Activated CD4-positive, alpha-beta T cell treated with anti-CD3 and anti-CD28 coated beads, Interleukin-2, amount 10 ng/mL, durations not matched to agents 24 days and 14 days (primary cell): ENCODE measurements at regions of chr6 and their contacts with region 1.

Region 1: GRCh38 chr6:35583893-35584688 is 71.4 kb upstream of the TULP1 start:
- DNase-seq: peak; percentile 91
- H3K4me3 Mint-ChIP-seq: no peak overlapping the region
- H3K27ac Mint-ChIP-seq: no peak overlapping the region
- H3K4me1 Mint-ChIP-seq: peaks cover 32% of the 10 kb centered on the region
- H3K27me3 Mint-ChIP-seq: no peaks in the 10 kb centered on the region

Region 2: DNA sequence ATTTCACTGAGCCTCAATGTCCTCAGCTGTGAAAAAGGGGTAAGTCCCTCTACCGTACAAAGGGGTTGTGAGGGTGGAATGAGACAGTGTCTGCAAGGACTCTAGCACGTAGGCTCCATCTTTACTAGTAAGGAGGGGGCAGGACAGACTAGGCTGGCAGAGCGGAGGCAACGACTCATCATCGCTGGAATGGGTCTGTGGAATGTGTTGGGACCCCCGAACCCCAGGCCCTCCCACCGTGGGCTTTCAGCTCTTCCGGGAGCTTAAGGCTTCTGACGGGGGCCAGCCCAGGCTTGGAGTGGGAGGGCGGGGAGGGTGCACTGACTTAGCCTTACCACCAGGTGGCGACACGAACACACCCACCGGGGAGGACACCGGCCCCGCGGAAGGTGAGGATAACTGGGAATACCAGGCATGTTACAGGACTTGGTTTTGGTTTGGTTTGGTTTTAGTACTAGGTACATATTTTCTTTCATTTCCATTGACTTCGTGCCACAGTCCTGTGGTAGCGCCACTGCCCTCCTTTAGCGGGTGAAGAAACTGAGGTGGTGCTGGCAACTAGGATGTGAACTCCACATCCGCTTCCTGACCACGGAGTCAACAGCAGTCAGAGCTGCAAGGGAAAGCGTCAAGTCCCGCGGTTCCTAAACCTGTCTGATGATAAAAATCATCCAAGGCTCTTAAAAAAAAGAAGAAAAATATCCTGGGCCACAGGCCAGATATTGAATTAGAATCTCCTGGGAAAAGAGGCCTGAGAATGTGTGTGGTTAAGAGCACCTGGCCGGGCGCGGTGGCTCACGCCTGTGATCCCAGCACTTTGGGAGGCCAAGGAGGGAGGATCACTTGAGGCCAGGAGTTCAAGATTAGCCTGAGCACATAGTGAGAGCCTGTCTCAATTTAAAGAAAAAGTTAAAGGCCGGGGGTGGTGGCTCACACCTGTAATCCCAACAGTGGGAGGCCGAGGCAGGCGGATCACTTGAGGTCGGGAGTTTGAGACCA is 61.1 kb before region 1 on chr6:
- intact Hi-C with region 1: loop called (anchors 5 kb)
- DNase-seq: peak; percentile 89
- H3K4me3 Mint-ChIP-seq: peak overlapping the region; percentile 73
- H3K27ac Mint-ChIP-seq: peak overlapping the region; percentile 64
- H3K4me1 Mint-ChIP-seq: peaks cover 16% of the 10 kb centered on the region
- H3K27me3 Mint-ChIP-seq: peaks cover 5% of the 10 kb centered on the region

Region 3: DNA sequence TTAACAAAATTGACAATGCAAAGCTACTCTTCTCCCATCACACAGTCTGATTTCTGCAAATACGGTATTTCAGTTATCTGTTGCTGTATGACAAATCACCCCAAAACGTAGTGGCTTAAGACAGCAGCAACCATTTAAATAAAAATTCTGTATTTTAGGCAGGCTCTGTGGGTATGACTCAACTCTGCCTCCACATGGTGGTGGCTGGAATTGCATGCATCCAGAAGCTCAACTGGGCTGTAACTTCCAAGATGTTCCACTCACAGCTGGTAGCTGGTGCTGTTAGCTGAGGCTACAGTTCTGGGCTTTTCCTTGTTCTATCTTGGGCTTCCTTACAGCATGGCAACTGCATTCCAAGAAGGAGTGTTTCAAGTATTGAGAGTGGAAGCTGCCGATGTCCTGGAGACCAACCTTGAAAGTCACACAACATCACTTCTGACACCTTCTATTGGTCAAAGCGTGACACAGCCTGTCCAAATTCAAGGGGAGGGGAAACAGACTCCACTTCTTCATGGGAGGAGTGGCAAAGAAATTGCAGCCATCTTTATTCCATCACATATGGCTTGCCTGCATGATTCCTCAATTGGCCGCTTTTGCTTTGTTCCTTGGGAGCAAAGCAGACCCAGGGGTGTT is 31.7 kb before region 1 on chr6:
- intact Hi-C with region 1: no loop called
- DNase-seq: peak; percentile 88
- H3K4me3 Mint-ChIP-seq: no peak overlapping the region
- H3K27ac Mint-ChIP-seq: no peak overlapping the region
- H3K4me1 Mint-ChIP-seq: no peaks in the 10 kb centered on the region
- H3K27me3 Mint-ChIP-seq: peaks cover 12% of the 10 kb centered on the region

Region 4: GRCh38 chr6:35624341-35625070 is 40.4 kb after region 1 on chr6:
- intact Hi-C with region 1: loop called (anchors 1 kb)
- DNase-seq: peak; percentile 63
- H3K4me3 Mint-ChIP-seq: no peak overlapping the region
- H3K27ac Mint-ChIP-seq: peak overlapping the region; percentile 69
- H3K4me1 Mint-ChIP-seq: peaks cover 12% of the 10 kb centered on the region
- H3K27me3 Mint-ChIP-seq: no peaks in the 10 kb centered on the region

Region 5: GRCh38 chr6:35681298-35681697 is 97.2 kb after region 1 on chr6:
- intact Hi-C with region 1: loop called (anchors 1 kb)
- DNase-seq: peak; percentile 57
- H3K4me3 Mint-ChIP-seq: no peak overlapping the region
- H3K27ac Mint-ChIP-seq: peak overlapping the region; percentile 10
- H3K4me1 Mint-ChIP-seq: peaks cover 41% of the 10 kb centered on the region
- H3K27me3 Mint-ChIP-seq: no peaks in the 10 kb centered on the region

Region 6: GRCh38 chr6:35688581-35689322 is 104.7 kb after region 1 on chr6 and contains the start of gene FKBP5:
- intact Hi-C with region 1: loop called (anchors 2 kb)
- DNase-seq: peak; percentile 97
- H3K4me3 Mint-ChIP-seq: peak within 1 kb of the TSS; percentile 93
- H3K27ac Mint-ChIP-seq: peak within 1 kb of the TSS; percentile 92
- H3K4me1 Mint-ChIP-seq: peaks cover 15% of the 10 kb centered on the region
- H3K27me3 Mint-ChIP-seq: no peaks in the 10 kb centered on the region
- total RNA-seq, gene FKBP5: 85.0 and 85.1 TPM in 2 replicates

Region 7: DNA sequence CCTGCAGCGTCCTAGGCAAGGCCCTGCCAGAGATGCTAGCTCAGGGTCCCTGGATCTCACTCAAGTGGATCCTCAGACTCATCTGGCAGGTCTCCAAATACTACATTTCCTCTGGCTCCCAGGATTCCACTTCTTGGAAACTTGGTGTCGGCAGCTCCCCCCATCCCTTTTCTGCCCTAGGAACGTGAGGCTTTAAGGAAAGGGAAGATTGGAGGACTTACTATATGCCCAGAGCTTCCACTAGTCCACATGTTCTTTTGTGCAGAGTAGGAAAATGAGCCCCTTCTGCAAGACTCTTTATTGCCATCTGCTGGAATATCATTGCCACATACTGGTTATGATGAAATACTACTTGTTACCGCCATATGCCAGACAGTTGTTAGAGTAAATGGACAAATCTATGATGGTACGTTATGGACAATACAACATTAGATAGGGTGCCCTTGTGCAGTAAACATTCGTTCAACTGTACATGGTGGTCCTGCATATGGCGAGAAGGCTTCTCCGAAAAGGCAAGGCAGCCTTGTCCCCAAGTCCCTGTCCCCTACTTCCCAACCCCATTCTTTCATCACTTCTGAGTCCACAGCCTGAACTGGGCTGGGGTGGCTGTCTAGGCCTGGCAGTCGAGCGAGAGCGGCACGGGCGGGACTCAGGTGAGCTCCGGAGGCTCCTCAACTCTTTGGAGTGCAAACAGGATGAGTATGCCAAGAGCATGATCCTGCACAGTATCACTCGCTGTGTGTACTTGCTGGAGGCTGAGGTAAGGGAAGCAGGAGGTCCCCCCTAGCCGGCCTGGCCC is 153.5 kb after region 1 on chr6:
- intact Hi-C with region 1: loop called (anchors 1 kb)
- DNase-seq: peak; percentile 80
- H3K4me3 Mint-ChIP-seq: no peak overlapping the region
- H3K27ac Mint-ChIP-seq: peak overlapping the region; percentile 27
- H3K4me1 Mint-ChIP-seq: peaks cover 23% of the 10 kb centered on the region
- H3K27me3 Mint-ChIP-seq: no peaks in the 10 kb centered on the region